Posterior cingulate gyrus (tissue), 11 donors: ENCODE measurements at regions of chr13 and their contacts with region 1.

Region 1: DNA sequence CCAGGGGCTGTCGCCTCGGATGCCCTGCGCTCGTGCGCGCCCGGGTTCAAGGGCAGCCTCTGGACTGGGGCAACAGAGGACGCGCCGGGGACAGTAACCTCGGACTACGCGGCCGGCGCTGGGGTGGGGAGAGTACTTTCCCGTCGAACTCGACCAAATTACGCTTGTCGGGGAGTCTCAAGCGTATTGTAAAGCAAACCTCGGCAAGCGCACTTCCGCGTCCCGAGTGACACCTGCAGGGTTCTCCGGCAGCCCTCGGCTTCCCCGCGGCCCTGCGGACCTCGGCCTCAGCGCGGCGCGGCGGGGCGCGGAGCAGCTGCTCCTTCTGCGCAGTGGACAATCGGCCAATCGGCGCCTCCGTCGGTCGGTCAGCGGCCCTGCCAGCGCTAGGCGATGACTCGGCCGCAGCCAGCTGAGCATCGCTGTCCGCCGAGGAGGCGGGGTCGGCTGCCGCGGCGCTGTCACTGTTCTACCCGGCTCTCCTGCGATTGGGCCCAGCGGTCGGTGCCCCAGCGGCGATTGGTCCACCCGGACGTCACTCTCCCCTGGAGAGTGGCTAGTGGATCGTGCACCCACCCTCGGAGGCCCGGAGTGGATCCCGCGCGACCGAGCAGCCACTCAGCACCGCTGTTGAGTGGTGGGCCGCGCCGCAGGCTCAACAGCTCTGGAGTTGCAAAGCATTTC is at the start of gene SLC46A3:
- DNase-seq: peak; percentile 98 to 100 (median 99)

Region 2: DNA sequence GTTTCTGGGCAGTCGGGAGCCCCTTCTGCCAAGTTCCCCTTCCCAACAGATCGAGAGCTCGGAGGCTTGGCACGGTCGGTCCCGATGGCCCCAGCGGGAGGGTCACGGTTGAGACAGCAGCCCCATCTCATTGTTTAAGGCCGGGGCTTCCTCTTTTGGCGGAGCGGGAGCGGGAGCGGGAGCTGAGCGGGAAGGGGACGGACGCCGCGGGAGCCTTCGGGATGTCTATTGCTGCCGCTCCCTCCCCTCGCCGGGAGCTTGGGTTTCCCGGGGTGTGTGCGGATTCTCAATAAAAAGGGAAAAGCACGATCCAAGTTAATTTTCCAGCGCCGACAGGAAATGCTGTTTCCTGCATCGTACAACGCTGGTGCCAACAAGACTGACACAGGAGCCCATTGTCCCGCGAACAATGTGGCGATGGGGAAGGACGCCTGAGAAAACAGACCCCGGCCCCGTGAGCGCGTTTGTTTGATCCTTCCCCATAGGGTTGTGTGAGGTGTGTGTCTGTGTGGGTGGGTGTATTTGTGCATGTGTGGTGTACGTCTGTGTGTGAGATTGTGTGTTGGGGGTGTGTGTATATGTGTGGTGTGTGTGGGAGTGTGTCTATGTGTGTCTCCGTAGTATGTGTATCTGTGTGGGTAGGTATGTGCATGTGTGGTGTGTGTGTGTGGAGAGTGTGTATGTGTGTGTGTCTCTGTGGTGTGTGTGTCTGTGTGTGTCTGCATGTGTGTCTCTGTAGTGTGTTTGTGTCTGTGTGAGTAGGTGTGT is 187.4 kb before region 1 on chr13:
- intact Hi-C with region 1: no loop called
- DNase-seq: peak in 2 of 10 donors; percentile 18 to 78

Region 3: DNA sequence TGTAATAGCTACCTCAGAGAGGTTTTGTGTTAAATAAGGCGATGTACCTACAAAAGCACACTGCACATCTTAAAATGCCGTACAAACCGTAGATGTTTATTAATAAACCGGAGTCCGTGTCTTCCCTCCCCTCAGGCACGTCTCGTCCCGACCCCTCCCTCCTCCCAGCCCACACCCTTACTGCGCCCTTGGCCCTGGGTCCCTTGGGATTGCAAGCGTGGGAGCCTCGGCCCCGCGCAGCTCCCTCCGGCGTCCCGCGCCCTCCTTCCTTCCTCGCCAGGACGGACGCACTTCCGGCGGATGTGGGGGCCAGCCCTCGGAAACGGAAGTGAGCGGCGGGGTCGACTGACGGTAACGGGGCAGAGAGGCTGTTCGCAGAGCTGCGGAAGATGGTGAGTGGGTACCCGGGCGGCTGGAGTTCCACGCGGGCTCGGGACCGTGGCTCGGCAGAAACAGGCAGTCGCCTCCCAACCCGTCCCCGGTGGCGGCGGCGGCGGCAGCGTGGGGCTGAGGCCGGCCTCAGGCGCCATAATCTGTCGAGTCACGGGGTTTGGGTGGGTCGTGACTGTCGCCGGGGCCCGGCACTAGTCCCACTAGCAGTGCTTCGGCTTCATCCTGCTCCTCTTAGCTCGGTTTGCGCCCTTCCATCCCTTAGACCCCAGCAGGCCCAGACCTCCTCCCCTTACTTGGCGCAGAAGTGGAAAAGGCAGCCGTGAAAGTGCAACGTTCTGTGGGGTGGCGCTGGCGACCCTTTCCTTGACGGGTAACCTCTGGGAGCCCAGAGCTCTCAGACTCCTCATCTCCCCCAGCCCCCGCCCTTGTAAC is 59.7 kb before region 1 on chr13 and contains the start of gene POMP:
- intact Hi-C with region 1: loop called (anchors 2 kb)
- DNase-seq: peak; percentile 89 to 99 (median 94)

Region 4: GRCh38 chr13:28741084-28741491 is 22.4 kb after region 1 on chr13:
- intact Hi-C with region 1: loop called (anchors 1 kb)
- DNase-seq: no peak